ENCODE measurements at regions of chr10 and their contacts with region 1.

Region 1: DNA sequence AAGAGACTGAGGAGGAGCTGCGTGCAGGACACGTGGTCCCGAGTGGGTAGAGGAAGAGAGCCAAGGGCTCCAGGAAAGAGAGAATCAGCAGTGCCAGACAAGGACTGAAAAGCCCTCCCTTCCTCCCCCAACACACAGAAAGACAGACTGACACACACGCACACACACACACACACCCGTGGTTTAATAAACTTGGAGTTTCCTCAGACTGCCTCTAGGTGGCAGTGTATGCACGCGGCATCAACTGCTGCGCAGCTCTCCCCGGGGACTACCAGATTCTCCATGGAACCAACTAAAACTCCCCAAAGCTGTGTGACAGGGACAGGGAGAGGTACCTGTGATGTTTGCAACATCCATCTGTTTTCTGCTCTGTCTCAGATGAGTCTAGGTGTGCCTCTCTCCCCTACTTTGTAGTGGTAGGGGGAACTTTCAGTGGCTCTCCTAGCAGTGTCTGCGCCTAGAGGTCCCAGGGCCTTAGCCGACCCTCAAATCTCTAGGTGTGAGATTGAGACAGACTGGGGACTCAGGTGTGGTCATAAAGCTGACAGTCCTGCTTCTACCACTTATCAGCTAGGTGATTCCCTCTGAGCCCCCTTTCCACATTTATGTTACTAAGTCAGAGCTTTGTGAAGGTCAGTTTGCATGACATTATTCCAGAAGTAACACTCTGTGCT is 9.3 kb upstream of the TSPAN14 start:
- DNase-seq: peak; percentile 63
- ATAC-seq: peak; percentile 89
- H3K4me3 ChIP-seq: no peak overlapping the region
- H3K27ac ChIP-seq: no peak overlapping the region
- H3K4me1 ChIP-seq: peaks cover 17% of the 10 kb centered on the region
- H3K27me3 ChIP-seq: no peaks in the 10 kb centered on the region
- CTCF ChIP-seq: peak; percentile 90 to 99 (median 93)
- EP300 ChIP-seq: no peak
- POLR2A ChIP-seq: no peak
- RAD21 ChIP-seq: peak; percentile 100

Region 2: GRCh38 chr10:80324086-80324485 is 120.7 kb before region 1 on chr10:
- CTCF ChIA-PET with region 1: no interaction called
- POLR2A ChIA-PET with region 1: no interaction called
- RAD21 ChIA-PET with region 1: no interaction called
- SMC1A ChIA-PET with region 1: no interaction called
- in situ Hi-C with region 1: no loop called
- intact Hi-C with region 1: no loop called
- DNase-seq: no peak
- ATAC-seq: peak; percentile 54
- H3K4me3 ChIP-seq: no peak overlapping the region
- H3K27ac ChIP-seq: no peak overlapping the region
- H3K4me1 ChIP-seq: no peaks in the 10 kb centered on the region
- H3K27me3 ChIP-seq: peaks cover 0 to 1% of the 10 kb centered on the region in 2 experiments; a peak in 2 of 4 replicates
- CTCF ChIP-seq: no peak
- EP300 ChIP-seq: no peak
- POLR2A ChIP-seq: no peak
- RAD21 ChIP-seq: no peak

Region 3: DNA sequence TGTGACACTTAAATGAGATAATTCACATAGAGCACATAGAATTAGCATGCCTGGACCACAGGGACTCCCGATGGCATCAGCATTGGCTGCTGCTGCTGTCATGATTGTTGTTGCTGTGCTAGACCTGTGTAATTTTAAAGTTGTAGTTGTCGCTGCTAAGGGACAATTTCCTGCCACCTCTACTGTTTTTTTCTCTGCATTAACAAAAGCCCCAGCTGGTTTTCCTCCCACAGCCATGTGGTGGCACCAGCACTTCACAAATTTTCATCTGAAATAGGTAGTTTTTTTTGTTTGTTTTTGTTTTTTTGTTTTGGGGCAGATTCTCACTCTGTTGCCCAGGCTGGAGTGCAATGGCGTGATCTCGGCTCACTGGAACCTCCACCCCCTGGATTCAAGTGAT is 61.8 kb before region 1 on chr10:
- CTCF ChIA-PET with region 1: interaction called, 24 read pairs
- POLR2A ChIA-PET with region 1: no interaction called
- RAD21 ChIA-PET with region 1: interaction called, 17 read pairs
- SMC1A ChIA-PET with region 1: interaction called, 10 read pairs
- in situ Hi-C with region 1: no loop called
- intact Hi-C with region 1: loop called (anchors 1 kb)
- DNase-seq: peak; percentile 19
- ATAC-seq: peak; percentile 65
- H3K4me3 ChIP-seq: no peak overlapping the region
- H3K27ac ChIP-seq: no peak overlapping the region
- H3K4me1 ChIP-seq: no peaks in the 10 kb centered on the region
- H3K27me3 ChIP-seq: peaks cover 0 to 3% of the 10 kb centered on the region in 2 experiments; a peak in 1 of 4 replicates
- CTCF ChIP-seq: peak; percentile 52 to 68 (median 66)
- EP300 ChIP-seq: no peak
- POLR2A ChIP-seq: no peak
- RAD21 ChIP-seq: peak; percentile 72

Region 4: DNA sequence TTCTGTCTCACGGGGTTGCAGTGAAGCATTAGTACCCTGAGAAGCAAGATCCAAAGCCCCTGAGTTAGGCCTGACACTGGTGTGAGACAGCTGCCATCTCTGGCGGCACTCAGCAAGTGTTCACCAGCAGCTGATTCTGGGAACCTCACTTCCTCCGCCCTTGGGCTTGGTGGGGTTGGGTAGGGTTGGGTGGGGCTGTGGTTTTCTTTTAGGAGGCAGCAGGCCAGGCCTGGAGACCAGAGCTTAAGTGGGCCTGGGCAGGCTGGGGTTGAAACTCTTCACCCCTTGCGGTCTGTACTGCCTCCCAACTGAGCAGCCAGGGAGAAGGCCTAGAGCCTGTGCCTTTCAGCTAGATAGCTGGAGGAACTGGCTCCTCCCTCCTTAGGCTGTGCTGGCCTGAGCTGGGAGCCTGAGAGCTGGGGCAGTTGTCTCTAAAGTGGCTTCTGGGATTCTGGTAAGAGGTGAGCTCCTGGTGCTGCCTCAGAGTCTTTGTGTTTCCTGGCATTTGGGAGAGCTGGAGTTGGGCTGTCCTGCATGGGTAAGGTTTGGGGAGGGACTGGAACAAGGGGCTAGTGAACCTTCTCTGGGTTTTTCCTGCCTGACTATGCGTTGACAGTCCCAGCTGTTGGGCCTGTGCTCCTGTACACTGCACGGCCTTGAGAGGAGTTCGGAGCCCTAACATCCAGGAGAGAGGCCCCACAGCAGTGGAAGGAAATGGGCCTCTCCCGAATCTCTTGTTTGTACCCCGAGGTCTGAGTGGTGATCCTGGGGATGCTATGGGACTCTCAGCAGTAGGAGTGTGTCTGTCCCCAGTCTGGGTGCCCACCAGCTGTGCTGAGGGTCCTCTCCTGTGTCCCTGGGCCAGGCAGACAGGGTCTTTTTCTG is 14.5 kb after region 1 on chr10:
- CTCF ChIA-PET with region 1: interaction called, 25 read pairs
- POLR2A ChIA-PET with region 1: interaction called, 8 read pairs
- RAD21 ChIA-PET with region 1: interaction called, 53 read pairs
- SMC1A ChIA-PET with region 1: interaction called, 87 read pairs
- in situ Hi-C with region 1: no loop called
- intact Hi-C with region 1: no loop called
- DNase-seq: peak; percentile 73
- ATAC-seq: peak; percentile 59
- H3K4me3 ChIP-seq: peak overlapping the region; percentile 92; the same call in 1 of the 2 replicates
- H3K27ac ChIP-seq: peak overlapping the region; percentile 45
- H3K4me1 ChIP-seq: peaks cover 79% of the 10 kb centered on the region
- H3K27me3 ChIP-seq: no peaks in the 10 kb centered on the region
- CTCF ChIP-seq: peak; percentile 11 to 15 (median 14); a peak in 2 of 6 replicates
- EP300 ChIP-seq: no peak
- POLR2A ChIP-seq: peak; percentile 43; the same call in 1 of the 2 replicates
- RAD21 ChIP-seq: no peak

Region 5: GRCh38 chr10:80498833-80499741 is 54.3 kb after region 1 on chr10:
- CTCF ChIA-PET with region 1: interaction called, 852 read pairs
- POLR2A ChIA-PET with region 1: interaction called, 29 read pairs
- RAD21 ChIA-PET with region 1: interaction called, 432 read pairs
- SMC1A ChIA-PET with region 1: interaction called, 1,038 read pairs
- in situ Hi-C with region 1: loop called (anchors 5 kb)
- intact Hi-C with region 1: no loop called
- DNase-seq: no peak
- ATAC-seq: peak; percentile 34
- H3K4me3 ChIP-seq: no peak overlapping the region
- H3K27ac ChIP-seq: peak overlapping the region; percentile 39
- H3K4me1 ChIP-seq: peaks cover 45% of the 10 kb centered on the region
- H3K27me3 ChIP-seq: no peaks in the 10 kb centered on the region
- CTCF ChIP-seq: no peak
- EP300 ChIP-seq: no peak
- POLR2A ChIP-seq: 0 out of 2 replicates have a peak, but pooled peaks have one; percentile 15
- RAD21 ChIP-seq: no peak

Region 6: DNA sequence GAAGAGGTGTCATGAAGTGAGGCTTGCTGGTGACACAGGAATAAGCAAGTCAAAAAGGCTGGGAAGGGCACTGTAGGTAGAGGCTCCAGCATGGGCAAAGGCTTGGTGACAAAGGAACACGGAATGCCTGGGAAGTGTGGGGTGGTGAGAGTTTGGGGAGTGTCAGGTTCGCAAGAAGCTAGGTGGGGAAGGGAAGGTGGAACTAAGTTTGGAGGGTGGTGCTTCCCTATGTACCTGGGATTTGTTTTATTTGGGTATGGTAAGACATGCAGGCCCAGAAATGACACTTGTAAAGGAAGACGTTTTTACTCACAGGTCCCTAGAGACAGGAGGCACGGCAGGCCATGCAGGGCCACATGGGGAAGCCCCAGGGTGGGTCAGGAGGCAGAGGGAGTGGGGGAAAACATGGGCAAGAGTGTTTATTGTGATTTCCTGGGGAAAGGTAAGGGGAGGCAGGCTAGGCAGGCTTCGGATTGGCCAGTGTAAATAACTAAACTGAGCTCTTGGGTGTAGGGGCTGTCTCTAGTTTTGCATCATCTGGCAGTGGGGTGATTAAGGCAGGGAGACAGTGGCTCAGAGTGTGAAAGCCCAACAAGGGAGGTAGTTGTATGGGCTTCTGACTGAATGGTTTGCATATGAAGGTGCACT is 145.1 kb after region 1 on chr10:
- CTCF ChIA-PET with region 1: interaction called, 11 read pairs
- POLR2A ChIA-PET with region 1: no interaction called
- RAD21 ChIA-PET with region 1: interaction called, 6 read pairs
- SMC1A ChIA-PET with region 1: interaction called, 6 read pairs
- in situ Hi-C with region 1: loop called (anchors 10 kb)
- intact Hi-C with region 1: no loop called
- DNase-seq: peak; percentile 67
- ATAC-seq: peak; percentile 94
- H3K4me3 ChIP-seq: no peak overlapping the region
- H3K27ac ChIP-seq: peak overlapping the region; percentile 27
- H3K4me1 ChIP-seq: peaks cover 7% of the 10 kb centered on the region; the same call in 1 of the 2 replicates
- H3K27me3 ChIP-seq: no peaks in the 10 kb centered on the region
- CTCF ChIP-seq: no peak
- EP300 ChIP-seq: peak; percentile 61 to 68; a peak in 2 of 4 replicates
- POLR2A ChIP-seq: no peak
- RAD21 ChIP-seq: no peak

Region 7: GRCh38 chr10:80699602-80700039 is 254.8 kb after region 1 on chr10:
- CTCF ChIA-PET with region 1: interaction called, 7 read pairs
- POLR2A ChIA-PET with region 1: no interaction called
- RAD21 ChIA-PET with region 1: interaction called, 4 read pairs
- SMC1A ChIA-PET with region 1: interaction called, 3 read pairs
- in situ Hi-C with region 1: no loop called
- intact Hi-C with region 1: loop called (anchors 2 kb)
- DNase-seq: no peak
- ATAC-seq: peak; percentile 96
- H3K4me3 ChIP-seq: no peak overlapping the region
- H3K27ac ChIP-seq: no peak overlapping the region
- H3K4me1 ChIP-seq: no peaks in the 10 kb centered on the region; the same call in 1 of the 2 replicates
- H3K27me3 ChIP-seq: no peaks in the 10 kb centered on the region
- CTCF ChIP-seq: peak; percentile 88 to 92 (median 90)
- EP300 ChIP-seq: no peak
- POLR2A ChIP-seq: no peak
- RAD21 ChIP-seq: peak; percentile 88

Region 8: DNA sequence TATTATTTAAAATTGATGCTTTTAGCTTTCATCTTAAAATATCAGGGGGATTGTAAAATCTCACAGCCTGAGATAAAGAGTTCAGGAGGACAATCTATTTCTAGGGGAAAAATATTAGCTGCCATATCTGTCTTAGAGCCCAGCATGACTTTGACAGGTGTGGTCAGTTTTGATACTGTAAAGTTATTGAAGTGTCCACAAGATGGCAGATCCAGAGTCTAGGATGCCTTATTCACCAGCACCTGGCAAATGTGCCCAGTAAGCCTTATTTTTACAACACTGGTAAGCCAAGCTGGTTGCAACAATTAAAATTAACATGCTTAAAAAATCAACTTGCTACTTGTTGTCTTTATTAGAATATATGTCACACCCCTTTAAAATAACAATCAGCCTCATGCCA is 672.2 kb after region 1 on chr10:
- CTCF ChIA-PET with region 1: no interaction called
- POLR2A ChIA-PET with region 1: no interaction called
- RAD21 ChIA-PET with region 1: no interaction called
- SMC1A ChIA-PET with region 1: no interaction called
- in situ Hi-C with region 1: no loop called
- intact Hi-C with region 1: no loop called
- DNase-seq: no peak
- ATAC-seq: peak; percentile 58
- H3K4me3 ChIP-seq: no peak overlapping the region
- H3K27ac ChIP-seq: no peak overlapping the region
- H3K4me1 ChIP-seq: no peaks in the 10 kb centered on the region
- H3K27me3 ChIP-seq: no peaks in the 10 kb centered on the region
- CTCF ChIP-seq: no peak
- EP300 ChIP-seq: no peak
- POLR2A ChIP-seq: no peak
- RAD21 ChIP-seq: no peak

Measured in GM12878 (cell line).